Activated B cell treated with CpG ODN at 0.5 μM for 24 hours (primary cell): ENCODE measurements at regions of chr20 and their contacts with region 1.

Region 1: GRCh38 chr20:36605399-36606157 is at the start of gene RAB5IF:
- DNase-seq: peak; percentile 99
- ATAC-seq: peak; percentile 83
- H3K4me3 Mint-ChIP-seq: peak within 1 kb of the TSS; percentile 97
- H3K27ac Mint-ChIP-seq: peak within 1 kb of the TSS; percentile 99
- H3K4me1 Mint-ChIP-seq: peaks cover 53% of the 10 kb centered on the region
- H3K27me3 Mint-ChIP-seq: no peaks in the 10 kb centered on the region
- CTCF ChIP-seq: peak; percentile 58
- total RNA-seq, gene RAB5IF: 54.9 and 55.7 TPM in 2 replicates

Region 2: GRCh38 chr20:36493013-36493800 is 112.4 kb before region 1 on chr20:
- CTCF ChIA-PET with region 1: no interaction called
- POLR2A ChIA-PET with region 1: interaction called, 10 read pairs
- intact Hi-C with region 1: no loop called
- DNase-seq: no peak
- ATAC-seq: no peak
- H3K4me3 Mint-ChIP-seq: no peak overlapping the region
- H3K27ac Mint-ChIP-seq: no peak overlapping the region
- H3K4me1 Mint-ChIP-seq: peaks cover 32% of the 10 kb centered on the region
- H3K27me3 Mint-ChIP-seq: no peaks in the 10 kb centered on the region
- CTCF ChIP-seq: no peak

Region 3: DNA sequence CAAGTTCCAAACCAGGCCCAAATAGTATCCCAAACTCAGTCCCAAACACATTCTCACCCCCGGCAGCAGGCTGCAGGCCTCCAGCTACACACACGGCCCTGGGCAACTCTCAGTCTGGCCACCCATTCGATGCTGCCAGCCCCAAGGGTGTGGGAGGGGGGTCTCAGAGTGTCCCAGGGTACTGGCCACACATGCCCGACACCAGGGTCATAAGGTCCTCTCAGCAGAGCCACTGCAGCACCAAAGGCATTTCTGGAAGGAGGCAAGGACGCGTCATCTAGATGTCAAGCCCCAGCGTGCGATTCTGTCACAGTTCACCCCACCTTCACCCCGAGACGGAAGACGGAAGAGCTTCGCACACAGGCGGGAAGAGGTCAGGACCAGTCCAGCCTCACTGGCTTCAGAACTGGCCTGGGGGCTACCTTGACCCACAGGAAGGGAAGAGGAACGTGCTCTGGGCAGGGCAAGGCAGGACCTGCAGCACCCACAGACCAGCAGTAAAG is 54.7 kb before region 1 on chr20:
- CTCF ChIA-PET with region 1: interaction called, 4 read pairs
- POLR2A ChIA-PET with region 1: interaction called, 3 read pairs
- intact Hi-C with region 1: loop called (anchors 1 kb)
- DNase-seq: no peak
- ATAC-seq: no peak
- H3K4me3 Mint-ChIP-seq: no peak overlapping the region
- H3K27ac Mint-ChIP-seq: no peak overlapping the region
- H3K4me1 Mint-ChIP-seq: peaks cover 2% of the 10 kb centered on the region
- H3K27me3 Mint-ChIP-seq: no peaks in the 10 kb centered on the region
- CTCF ChIP-seq: no peak

Region 4: DNA sequence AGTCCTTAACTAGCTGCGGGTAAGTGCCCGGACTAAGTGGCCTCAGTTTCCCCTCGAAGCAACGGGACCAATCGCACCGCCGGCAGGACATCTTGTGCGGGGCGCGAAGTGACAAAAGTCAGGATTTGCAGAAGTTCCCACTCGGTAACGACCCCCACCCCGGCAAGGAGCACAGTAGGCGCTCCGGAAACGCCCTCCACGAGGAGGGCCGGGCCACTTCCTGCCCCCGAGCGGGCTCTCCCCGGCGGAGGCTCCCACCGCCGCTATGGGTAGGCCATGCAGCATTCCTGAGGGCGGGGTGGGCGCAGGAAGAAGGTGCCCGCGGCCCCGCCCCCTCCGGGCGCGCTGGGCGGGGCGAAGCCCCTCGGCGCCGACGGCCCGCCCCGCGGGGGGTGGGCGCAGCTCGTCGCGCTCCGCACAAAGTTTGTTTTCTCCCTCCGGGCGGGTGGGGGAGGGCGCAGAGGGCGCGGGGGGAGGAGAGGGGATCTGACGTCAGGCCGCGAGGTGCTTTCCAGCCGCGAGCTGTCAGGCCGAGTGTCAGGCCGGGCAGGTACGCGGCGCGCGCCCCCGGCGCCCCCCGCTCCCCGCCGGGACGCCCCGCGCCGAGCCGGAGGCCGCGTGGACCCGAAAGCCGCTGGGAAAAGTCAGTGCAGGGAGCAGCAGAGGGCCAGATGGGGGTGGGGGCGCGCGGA is 32.3 kb before region 1 on chr20 and contains the start of gene TGIF2:
- CTCF ChIA-PET with region 1: interaction called, 39 read pairs
- POLR2A ChIA-PET with region 1: interaction called, 268 read pairs
- intact Hi-C with region 1: loop called (anchors 1 kb)
- DNase-seq: peak; percentile 92
- ATAC-seq: peak; percentile 77
- H3K4me3 Mint-ChIP-seq: peak within 1 kb of the TSS; percentile 90
- H3K27ac Mint-ChIP-seq: peak within 1 kb of the TSS; percentile 91
- H3K4me1 Mint-ChIP-seq: peaks cover 36% of the 10 kb centered on the region
- H3K27me3 Mint-ChIP-seq: no peaks in the 10 kb centered on the region
- CTCF ChIP-seq: no peak
- total RNA-seq, gene TGIF2: 40.8 and 43.8 TPM in 2 replicates

Region 5: GRCh38 chr20:36717657-36718056 is 112.1 kb after region 1 on chr20:
- CTCF ChIA-PET with region 1: no interaction called
- POLR2A ChIA-PET with region 1: interaction called, 12 read pairs
- intact Hi-C with region 1: no loop called
- DNase-seq: no peak
- ATAC-seq: no peak
- H3K4me3 Mint-ChIP-seq: no peak overlapping the region
- H3K27ac Mint-ChIP-seq: no peak overlapping the region
- H3K4me1 Mint-ChIP-seq: no peaks in the 10 kb centered on the region
- H3K27me3 Mint-ChIP-seq: no peaks in the 10 kb centered on the region
- CTCF ChIP-seq: no peak

Region 6: DNA sequence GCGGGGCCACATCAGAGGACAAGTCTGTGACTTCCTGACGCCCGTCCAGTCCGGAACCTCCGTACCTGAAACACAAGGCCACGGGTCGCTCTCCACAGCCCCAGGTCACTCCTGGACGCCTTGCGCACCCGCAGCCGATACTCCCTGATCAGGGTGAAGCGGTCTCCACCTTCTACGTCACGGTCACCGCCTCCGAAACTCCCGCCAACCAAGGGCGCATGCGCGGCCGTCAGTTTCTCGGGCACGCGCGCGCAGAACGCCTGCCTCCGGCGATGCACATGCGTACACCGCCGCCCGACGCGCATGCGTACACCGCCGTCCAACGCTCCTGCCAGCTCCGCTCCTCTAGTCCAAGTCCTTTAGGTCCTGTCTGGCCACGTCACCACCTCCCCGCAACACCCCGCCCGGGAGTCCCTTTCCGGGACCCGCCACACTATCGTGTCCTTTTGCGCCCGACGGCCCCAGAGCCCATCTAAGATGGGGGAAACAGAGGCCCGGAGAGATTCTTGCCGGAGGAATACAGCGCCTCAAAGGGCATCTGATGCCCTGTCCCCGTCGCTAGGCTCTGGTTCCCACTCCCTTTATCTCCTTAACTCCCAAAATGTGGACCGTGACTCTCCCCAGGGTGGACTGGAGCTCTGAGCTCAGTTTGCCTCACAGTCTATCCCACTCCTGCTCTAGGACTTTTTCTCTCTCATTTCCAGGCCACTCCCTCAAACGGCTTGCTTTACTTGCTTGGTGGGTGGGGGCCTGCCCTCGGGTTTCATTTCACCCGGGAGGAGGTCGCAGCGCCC is 168.2 kb after region 1 on chr20 and contains the start of gene DSN1:
- CTCF ChIA-PET with region 1: no interaction called
- POLR2A ChIA-PET with region 1: interaction called, 12 read pairs
- intact Hi-C with region 1: loop called (anchors 1 kb)
- DNase-seq: peak; percentile 99
- ATAC-seq: peak; percentile 87
- H3K4me3 Mint-ChIP-seq: peak within 1 kb of the TSS; percentile 91
- H3K27ac Mint-ChIP-seq: peak within 1 kb of the TSS; percentile 94
- H3K4me1 Mint-ChIP-seq: peaks cover 35% of the 10 kb centered on the region
- H3K27me3 Mint-ChIP-seq: peaks cover 2% of the 10 kb centered on the region
- CTCF ChIP-seq: no peak
- total RNA-seq, gene DSN1: 11.2 and 14.0 TPM in 2 replicates

Region 7: DNA sequence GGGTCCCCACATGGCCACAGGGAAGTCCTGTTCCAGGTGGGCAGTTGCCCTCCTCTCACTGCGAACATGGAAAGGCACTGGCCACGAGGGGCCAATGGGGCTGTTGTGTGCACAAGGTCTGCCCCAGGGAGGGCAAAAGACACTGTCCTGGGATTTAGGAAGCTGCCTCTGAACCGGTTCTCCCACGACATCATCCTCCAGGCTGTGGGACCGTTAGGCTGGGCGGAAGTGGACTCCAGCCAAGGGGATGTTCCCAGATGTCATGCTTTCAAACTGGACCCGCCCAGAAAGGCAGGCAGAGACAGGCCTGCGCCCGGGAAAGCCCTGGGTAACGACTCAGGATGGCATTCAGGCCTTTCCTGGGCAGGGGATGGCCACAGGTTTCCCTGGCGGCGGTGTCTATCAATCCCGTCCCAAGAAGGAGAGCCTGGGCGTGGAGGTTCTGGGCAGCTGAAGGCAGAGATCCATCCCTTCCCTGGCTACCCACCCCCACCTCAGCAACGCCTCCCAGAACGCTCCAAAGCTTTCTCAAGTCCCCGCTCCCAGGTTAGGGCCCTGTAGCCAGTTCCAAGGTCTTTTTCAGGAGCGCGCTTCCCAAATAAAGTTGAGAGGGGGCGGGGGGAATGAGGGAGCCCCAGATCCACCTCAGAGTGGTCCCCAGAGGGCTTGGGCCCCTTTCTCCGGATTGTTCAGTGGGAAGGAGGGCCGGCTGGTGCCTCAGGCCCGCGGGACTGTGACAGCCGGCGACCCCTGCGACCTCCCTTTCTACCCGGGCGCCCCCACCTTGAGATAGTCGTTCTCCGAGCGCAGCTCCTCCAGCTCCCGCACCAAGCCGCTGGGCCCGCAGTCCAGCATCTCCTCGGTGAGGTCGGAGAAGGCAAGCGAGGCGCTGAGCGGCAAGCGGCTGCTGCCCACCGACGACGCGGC is 256.6 kb after region 1 on chr20:
- CTCF ChIA-PET with region 1: interaction called, 3 read pairs
- POLR2A ChIA-PET with region 1: interaction called, 11 read pairs
- intact Hi-C with region 1: loop called (anchors 2 kb)
- DNase-seq: no peak
- ATAC-seq: no peak
- H3K4me3 Mint-ChIP-seq: peak overlapping the region; percentile 78
- H3K27ac Mint-ChIP-seq: peak overlapping the region; percentile 35
- H3K4me1 Mint-ChIP-seq: peaks cover 76% of the 10 kb centered on the region
- H3K27me3 Mint-ChIP-seq: no peaks in the 10 kb centered on the region
- CTCF ChIP-seq: no peak